ENCODE measurements at regions of chr19 and their contacts with region 1.

Region 1: GRCh38 chr19:46515879-46516350 is 20.2 kb upstream of the PNMA8B start:
- DNase-seq: peak; percentile 50
- H3K4me3 Mint-ChIP-seq: no peak overlapping the region
- H3K27ac Mint-ChIP-seq: peak overlapping the region; percentile 51
- H3K4me1 Mint-ChIP-seq: peaks cover 47% of the 10 kb centered on the region
- H3K27me3 Mint-ChIP-seq: peaks cover 21% of the 10 kb centered on the region

Region 2: GRCh38 chr19:46529622-46530462 is 13.9 kb after region 1 on chr19:
- CTCF ChIA-PET with region 1: interaction called, 22 read pairs
- POLR2A ChIA-PET with region 1: no interaction called
- DNase-seq: peak; percentile 81
- H3K4me3 Mint-ChIP-seq: no peak overlapping the region
- H3K27ac Mint-ChIP-seq: peak overlapping the region; percentile 80
- H3K4me1 Mint-ChIP-seq: peaks cover 40% of the 10 kb centered on the region
- H3K27me3 Mint-ChIP-seq: peaks cover 2% of the 10 kb centered on the region